OCI-LY7 (cell line): ENCODE measurements at regions of chr14 and their contacts with region 1.

Region 1: GRCh38 chr14:23320774-23321571 is at the start of gene PABPN1:
- DNase-seq: peak; percentile 100
- H3K4me3 ChIP-seq: peak within 1 kb of the TSS; percentile 99
- H3K27ac ChIP-seq: peak within 1 kb of the TSS; percentile 83
- H3K4me1 ChIP-seq: peaks cover 27% of the 10 kb centered on the region
- CTCF ChIP-seq: no peak
- total RNA-seq, gene PABPN1: 120 and 167 TPM in 2 replicates

Region 2: GRCh38 chr14:23269193-23269592 is 51.8 kb before region 1 on chr14:
- CTCF ChIA-PET with region 1: interaction called, 3 read pairs
- POLR2A ChIA-PET with region 1: interaction called, 6 read pairs
- intact Hi-C with region 1: loop called (anchors 1 kb)
- DNase-seq: no peak
- H3K4me3 ChIP-seq: no peak overlapping the region
- H3K27ac ChIP-seq: no peak overlapping the region
- H3K4me1 ChIP-seq: no peaks in the 10 kb centered on the region
- CTCF ChIP-seq: no peak

Region 3: DNA sequence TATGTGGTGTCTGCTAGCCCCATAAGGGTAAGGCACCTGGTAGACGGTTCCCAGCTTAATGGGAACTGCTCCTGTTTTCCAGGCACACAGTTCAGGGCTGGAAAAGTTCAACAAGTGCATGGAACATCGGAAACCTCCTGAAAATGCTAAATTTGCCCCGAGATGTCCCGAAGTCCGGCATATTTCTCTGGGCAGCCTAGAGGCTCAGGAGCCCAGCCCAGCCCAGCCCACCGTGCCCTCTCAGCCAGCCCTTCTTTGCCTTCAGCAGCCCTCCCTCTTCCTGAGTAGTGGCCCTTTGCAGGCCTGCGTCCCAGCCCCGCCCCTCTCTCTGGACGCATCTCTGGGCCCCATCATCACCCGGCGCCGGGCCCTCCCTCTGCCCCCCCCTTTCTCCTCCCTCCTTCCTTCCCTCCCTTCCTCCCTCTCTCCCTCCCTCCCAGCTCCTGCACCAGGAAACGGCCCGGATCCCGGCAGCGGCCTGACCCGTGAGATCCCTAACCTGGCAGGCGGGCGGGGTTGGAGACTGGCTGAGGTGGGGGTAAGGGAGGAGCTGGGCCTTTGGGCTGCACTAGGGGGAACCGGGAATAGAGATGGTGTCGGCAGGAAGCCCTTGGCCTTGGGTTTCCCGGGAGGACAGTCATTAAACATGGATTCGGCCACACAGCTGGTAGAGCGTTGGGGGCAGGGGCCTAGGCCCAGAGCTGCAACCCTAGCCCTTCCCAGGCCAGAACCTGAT is 14.4 kb before region 1 on chr14 and contains the start of gene BCL2L2:
- CTCF ChIA-PET with region 1: interaction called, 6 read pairs
- POLR2A ChIA-PET with region 1: interaction called, 122 read pairs
- intact Hi-C with region 1: loop called (anchors 1 kb)
- DNase-seq: peak; percentile 74
- H3K4me3 ChIP-seq: peak within 1 kb of the TSS; percentile 77
- H3K27ac ChIP-seq: peak within 1 kb of the TSS; percentile 37
- H3K4me1 ChIP-seq: peaks cover 32% of the 10 kb centered on the region
- CTCF ChIP-seq: no peak
- total RNA-seq, gene BCL2L2: 7.2 and 8.6 TPM in 2 replicates

Region 4: GRCh38 chr14:23335623-23336022 is 14.7 kb after region 1 on chr14:
- CTCF ChIA-PET with region 1: no interaction called
- POLR2A ChIA-PET with region 1: interaction called, 14 read pairs
- intact Hi-C with region 1: no loop called
- DNase-seq: no peak
- H3K4me3 ChIP-seq: no peak overlapping the region
- H3K27ac ChIP-seq: no peak overlapping the region
- H3K4me1 ChIP-seq: no peaks in the 10 kb centered on the region
- CTCF ChIP-seq: no peak

Region 5: GRCh38 chr14:23469127-23469905 is 148.3 kb after region 1 on chr14 and contains the start of gene NGDN:
- CTCF ChIA-PET with region 1: no interaction called
- POLR2A ChIA-PET with region 1: interaction called, 6 read pairs
- intact Hi-C with region 1: loop called (anchors 5 kb)
- DNase-seq: peak; percentile 99
- H3K4me3 ChIP-seq: peak within 1 kb of the TSS; percentile 77
- H3K27ac ChIP-seq: peak within 1 kb of the TSS; percentile 21
- H3K4me1 ChIP-seq: peaks cover 10% of the 10 kb centered on the region
- CTCF ChIP-seq: peak; percentile 73
- total RNA-seq, gene NGDN: 53.6 and 87.1 TPM in 2 replicates

Region 6: DNA sequence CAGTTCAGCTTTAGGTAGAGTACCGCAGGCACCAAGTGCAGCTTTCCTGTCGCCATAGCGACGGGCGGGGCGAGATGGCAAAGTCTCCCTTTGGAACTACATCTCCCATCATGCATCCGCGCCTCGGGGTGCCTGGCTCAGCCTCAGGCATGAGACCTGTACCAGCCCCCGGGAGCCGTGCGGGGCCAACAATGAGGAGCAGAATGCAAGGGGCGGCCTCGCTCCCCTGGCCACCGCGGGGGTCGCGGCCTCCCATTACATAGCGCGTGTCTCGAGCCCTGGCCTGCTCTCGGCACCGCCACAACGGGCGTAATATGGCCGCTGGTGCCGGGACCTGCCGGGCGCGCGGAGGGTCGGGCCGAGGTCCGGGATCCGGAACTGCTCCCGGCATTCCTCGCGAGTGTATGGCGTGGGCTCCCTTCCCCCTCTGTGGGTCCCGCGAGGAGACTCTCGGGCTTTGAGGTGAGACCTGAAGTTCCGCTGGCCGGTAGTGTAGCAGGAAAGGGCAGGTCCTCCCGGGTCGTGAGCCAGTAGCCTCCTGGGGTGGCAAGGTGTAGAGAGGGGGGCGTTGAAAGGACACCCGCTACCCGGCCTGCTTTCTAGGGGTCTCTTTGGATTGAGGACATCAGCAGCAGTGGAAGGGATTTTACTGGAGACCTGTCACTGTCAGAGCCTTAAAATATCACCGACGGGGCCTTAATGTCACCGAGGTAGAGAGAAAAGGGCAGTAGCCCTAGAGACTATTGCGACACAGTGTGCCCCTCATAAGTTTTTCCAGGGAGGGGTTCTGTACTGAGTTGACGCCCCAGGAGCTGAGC is 235.1 kb after region 1 on chr14 and contains the start of gene THTPA:
- CTCF ChIA-PET with region 1: no interaction called
- POLR2A ChIA-PET with region 1: interaction called, 11 read pairs
- intact Hi-C with region 1: loop called (anchors 2 kb)
- DNase-seq: peak; percentile 93
- H3K4me3 ChIP-seq: peak within 1 kb of the TSS; percentile 72
- H3K27ac ChIP-seq: peak within 1 kb of the TSS; percentile 58
- H3K4me1 ChIP-seq: peaks cover 27% of the 10 kb centered on the region
- CTCF ChIP-seq: no peak
- total RNA-seq, gene THTPA: 20.9 and 28.6 TPM in 2 replicates

Region 7: GRCh38 chr14:23709923-23710322 is 388.9 kb after region 1 on chr14:
- CTCF ChIA-PET with region 1: no interaction called
- POLR2A ChIA-PET with region 1: no interaction called
- intact Hi-C with region 1: no loop called
- DNase-seq: no peak
- H3K4me3 ChIP-seq: no peak overlapping the region
- H3K27ac ChIP-seq: no peak overlapping the region
- H3K4me1 ChIP-seq: no peaks in the 10 kb centered on the region
- CTCF ChIP-seq: no peak